Transverse colon (tissue), 4 donors: ENCODE measurements at regions of chr2 and their contacts with region 1.

Region 1: GRCh38 chr2:237421542-237422116 is 7.7 kb upstream of the COL6A3 start:
- DNase-seq: peak; percentile 81
- H3K4me3 ChIP-seq: peak overlapping the region in 1 of 4 donors; percentile 8
- H3K27ac ChIP-seq: peak overlapping the region; percentile 28 to 78 (median 51)
- H3K4me1 ChIP-seq: peaks cover 4 to 11% (median 8%) of the 10 kb centered on the region in 4 donors
- H3K27me3 ChIP-seq: peaks cover 10% of the 10 kb centered on the region
- CTCF ChIP-seq: peak; percentile 76 to 80 (median 76)
- EP300 ChIP-seq: no peak
- POLR2A ChIP-seq: no peak

Region 2: GRCh38 chr2:237154082-237154638 is 267.5 kb before region 1 on chr2:
- in situ Hi-C with region 1: loop called in 2 of 4 experiments (anchors 25 kb)
- intact Hi-C with region 1: no loop called
- DNase-seq: no peak
- H3K4me3 ChIP-seq: no peak overlapping the region
- H3K27ac ChIP-seq: no peak overlapping the region
- H3K4me1 ChIP-seq: no peaks in the 10 kb centered on the region
- H3K27me3 ChIP-seq: no peaks in the 10 kb centered on the region
- CTCF ChIP-seq: peak; percentile 41 to 60 (median 48)
- EP300 ChIP-seq: no peak
- POLR2A ChIP-seq: no peak

Region 3: DNA sequence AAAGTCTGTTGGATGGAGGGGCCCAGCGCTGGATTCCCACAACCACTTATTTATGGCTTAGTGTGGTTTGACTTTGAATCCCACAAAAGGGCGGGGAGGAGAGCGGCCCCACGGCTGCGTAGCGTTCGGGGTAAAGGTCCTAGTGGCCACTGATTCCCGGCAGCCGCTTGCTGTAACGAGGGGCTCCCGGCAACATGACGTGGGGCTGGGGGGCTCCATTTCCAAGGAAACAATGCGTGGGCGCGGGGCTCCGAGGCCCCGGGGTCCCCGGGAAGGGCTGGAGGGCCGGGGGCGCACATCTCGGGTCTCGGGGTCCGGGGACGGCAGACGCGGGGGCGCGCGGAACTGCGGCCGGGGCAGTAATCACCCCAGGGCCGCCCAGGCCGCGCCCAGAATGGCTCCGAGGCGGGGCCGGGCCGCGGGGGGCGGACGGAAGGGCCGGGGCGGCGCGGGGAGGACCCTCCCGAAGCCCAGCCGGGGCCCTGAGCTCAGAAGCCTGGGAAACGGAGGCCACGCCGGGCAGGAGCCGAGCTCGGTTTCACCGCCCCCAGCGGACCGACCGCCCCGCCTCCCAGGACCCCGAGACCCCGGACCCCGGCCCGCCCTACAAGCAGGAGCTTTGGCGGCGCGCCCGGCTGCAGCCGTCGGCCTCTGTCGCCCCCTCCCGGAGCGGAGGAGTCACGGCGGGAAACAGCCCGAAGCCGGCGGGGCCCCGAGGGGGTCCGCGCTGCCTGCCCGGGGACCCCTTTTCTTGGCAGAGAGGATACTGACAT is 53.5 kb after region 1 on chr2:
- in situ Hi-C with region 1: no loop called
- intact Hi-C with region 1: loop called (anchors 5 kb)
- DNase-seq: peak; percentile 85
- H3K4me3 ChIP-seq: peak overlapping the region; percentile 74 to 76 (median 75)
- H3K27ac ChIP-seq: peak overlapping the region; percentile 90 to 96 (median 94)
- H3K4me1 ChIP-seq: peaks cover 4 to 19% (median 14%) of the 10 kb centered on the region in 4 donors
- H3K27me3 ChIP-seq: no peaks in the 10 kb centered on the region
- CTCF ChIP-seq: peak; percentile 87 to 96 (median 91)
- EP300 ChIP-seq: no peak
- POLR2A ChIP-seq: peak; percentile 48